Aorta (tissue), 5 donors: ENCODE measurements at regions of chr1 and their contacts with region 1.

Region 1: GRCh38 chr1:151340870-151341754 is 5.9 kb downstream of the RFX5 start:
- DNase-seq: no peak
- ATAC-seq: peak; percentile 91
- H3K4me3 ChIP-seq: no peak overlapping the region
- H3K27ac ChIP-seq: peak overlapping the region in 1 of 2 donors; percentile 26
- H3K4me1 ChIP-seq: peaks cover 0 to 2% of the 10 kb centered on the region in 2 donors
- H3K27me3 ChIP-seq: no peaks in the 10 kb centered on the region

Region 2: GRCh38 chr1:151281969-151282882 is 58.9 kb before region 1 on chr1 and contains the start of gene ZNF687:
- intact Hi-C with region 1: loop called in 1 of 2 experiments (anchors 5 kb)
- DNase-seq: peak; percentile 100
- ATAC-seq: peak; percentile 96
- H3K4me3 ChIP-seq: peak within 1 kb of the TSS; percentile 43 to 66
- H3K27ac ChIP-seq: peak within 1 kb of the TSS; percentile 8 to 96
- H3K4me1 ChIP-seq: no peaks in the 10 kb centered on the region
- H3K27me3 ChIP-seq: no peaks in the 10 kb centered on the region
- total RNA-seq, gene ZNF687: 18.4 to 24.0 TPM

Region 3: DNA sequence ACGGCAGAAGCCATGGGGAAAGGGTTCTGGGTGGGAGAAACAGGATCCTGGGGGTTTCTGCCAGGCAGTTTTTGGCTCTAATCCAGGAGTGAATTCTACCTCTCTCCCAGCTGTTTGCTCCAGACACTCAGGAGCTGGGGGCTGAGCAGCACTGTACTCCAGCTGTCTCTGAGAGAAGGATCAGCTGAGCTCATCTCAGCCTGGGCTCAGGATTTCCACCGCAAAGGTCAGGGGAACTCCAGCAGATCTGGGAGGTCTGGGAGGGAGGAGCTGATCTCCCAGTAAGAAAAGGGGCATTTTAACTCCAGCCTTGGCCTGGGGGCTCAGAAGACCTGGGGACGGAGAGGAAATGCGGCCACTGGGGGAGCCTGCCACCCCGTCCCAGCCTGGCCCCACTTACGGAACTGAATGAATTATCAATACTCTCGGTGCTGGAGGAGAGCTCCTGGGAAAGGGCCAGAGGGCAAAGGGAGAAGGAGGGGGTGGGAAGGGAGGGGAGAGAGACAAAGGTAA is 31.2 kb before region 1 on chr1:
- intact Hi-C with region 1: no loop called
- DNase-seq: no peak
- ATAC-seq: no peak
- H3K4me3 ChIP-seq: no peak overlapping the region
- H3K27ac ChIP-seq: no peak overlapping the region
- H3K4me1 ChIP-seq: peaks cover 0 to 2% of the 10 kb centered on the region in 2 donors
- H3K27me3 ChIP-seq: no peaks in the 10 kb centered on the region

Region 4: GRCh38 chr1:151443846-151444782 is 103.0 kb after region 1 on chr1:
- intact Hi-C with region 1: no loop called
- DNase-seq: no peak
- ATAC-seq: peak; percentile 88
- H3K4me3 ChIP-seq: no peak overlapping the region
- H3K27ac ChIP-seq: no peak overlapping the region
- H3K4me1 ChIP-seq: peaks cover 0 to 2% of the 10 kb centered on the region in 2 donors
- H3K27me3 ChIP-seq: no peaks in the 10 kb centered on the region